HepG2 (cell line): ENCODE measurements at regions of chr19 and their contacts with region 1.

Region 1: DNA sequence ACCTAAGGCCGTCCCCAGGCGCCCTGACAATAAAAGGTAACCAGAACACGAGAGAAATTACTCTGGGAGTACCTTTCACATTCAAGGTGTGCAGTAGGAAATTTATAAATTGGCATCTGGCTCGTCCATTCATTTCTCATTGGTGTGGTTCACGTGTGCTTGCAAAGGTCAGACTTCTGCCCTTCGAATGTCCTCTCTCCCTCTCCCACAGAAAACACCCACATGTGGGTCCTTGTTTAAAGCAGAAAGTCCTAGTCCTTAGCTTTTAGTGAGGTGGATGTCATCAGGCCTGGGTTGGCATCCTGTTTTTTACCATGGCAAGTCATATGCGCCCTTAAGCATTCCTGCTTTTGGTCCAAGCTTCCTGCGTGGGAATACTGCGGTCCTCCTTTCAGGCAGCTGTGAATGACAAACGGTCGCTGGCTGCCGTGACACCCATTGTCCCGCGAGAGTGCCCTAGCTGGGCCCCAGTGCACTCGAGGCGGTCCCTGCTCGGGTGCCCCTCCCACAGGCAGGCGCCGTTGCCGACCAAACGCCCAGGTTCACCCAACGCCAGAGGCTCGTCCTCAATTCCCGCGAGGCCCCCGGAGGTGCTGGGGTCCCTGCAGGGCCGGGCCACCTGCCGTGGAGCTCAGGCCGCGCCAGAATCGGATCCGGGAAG is at the start of gene NUDT19:
- DNase-seq: peak; percentile 78
- ATAC-seq: peak; percentile 94
- H3K4me3 ChIP-seq: peak within 1 kb of the TSS; percentile 54 to 75 (median 59)
- H3K27ac ChIP-seq: peak within 1 kb of the TSS; percentile 24
- H3K4me1 ChIP-seq: peaks cover 59% of the 10 kb centered on the region
- H3K27me3 ChIP-seq: no peaks in the 10 kb centered on the region
- CTCF ChIP-seq: no peak
- EP300 ChIP-seq: no peak
- POLR2A ChIP-seq: peak; percentile 73 to 74
- RAD21 ChIP-seq: no peak; the same call in 1 of the 2 replicates
- total RNA-seq, gene NUDT19: 3.6 and 3.9 TPM in 2 replicates

Region 2: GRCh38 chr19:32674959-32675719 is 16.3 kb before region 1 on chr19 and contains the start of gene ANKRD27:
- CTCF ChIA-PET with region 1: no interaction called
- POLR2A ChIA-PET with region 1: interaction called, 21 read pairs
- in situ Hi-C with region 1: no loop called
- intact Hi-C with region 1: no loop called
- DNase-seq: peak; percentile 96
- ATAC-seq: peak; percentile 93
- H3K4me3 ChIP-seq: peak within 1 kb of the TSS; percentile 74 to 88 (median 85)
- H3K27ac ChIP-seq: peak within 1 kb of the TSS; percentile 51
- H3K4me1 ChIP-seq: peaks cover 64% of the 10 kb centered on the region
- H3K27me3 ChIP-seq: peaks cover 3 to 15% of the 10 kb centered on the region in 2 experiments; a peak in 4 of 5 replicates
- CTCF ChIP-seq: no peak
- EP300 ChIP-seq: no peak
- POLR2A ChIP-seq: peak; percentile 57 to 87; a peak in 3 of 4 replicates
- RAD21 ChIP-seq: no peak
- total RNA-seq, gene ANKRD27: 23.7 and 30.6 TPM in 2 replicates